ENCODE measurements at regions of chr6 and their contacts with region 1.

Region 1: GRCh38 chr6:159654483-159655098 is 38.5 kb downstream of the SOD2 start:
- DNase-seq: no peak
- H3K4me3 ChIP-seq: no peak overlapping the region
- H3K27ac ChIP-seq: no peak overlapping the region
- H3K4me1 ChIP-seq: no peaks in the 10 kb centered on the region
- H3K27me3 ChIP-seq: no peaks in the 10 kb centered on the region
- CTCF ChIP-seq: peak; percentile 64

Region 2: DNA sequence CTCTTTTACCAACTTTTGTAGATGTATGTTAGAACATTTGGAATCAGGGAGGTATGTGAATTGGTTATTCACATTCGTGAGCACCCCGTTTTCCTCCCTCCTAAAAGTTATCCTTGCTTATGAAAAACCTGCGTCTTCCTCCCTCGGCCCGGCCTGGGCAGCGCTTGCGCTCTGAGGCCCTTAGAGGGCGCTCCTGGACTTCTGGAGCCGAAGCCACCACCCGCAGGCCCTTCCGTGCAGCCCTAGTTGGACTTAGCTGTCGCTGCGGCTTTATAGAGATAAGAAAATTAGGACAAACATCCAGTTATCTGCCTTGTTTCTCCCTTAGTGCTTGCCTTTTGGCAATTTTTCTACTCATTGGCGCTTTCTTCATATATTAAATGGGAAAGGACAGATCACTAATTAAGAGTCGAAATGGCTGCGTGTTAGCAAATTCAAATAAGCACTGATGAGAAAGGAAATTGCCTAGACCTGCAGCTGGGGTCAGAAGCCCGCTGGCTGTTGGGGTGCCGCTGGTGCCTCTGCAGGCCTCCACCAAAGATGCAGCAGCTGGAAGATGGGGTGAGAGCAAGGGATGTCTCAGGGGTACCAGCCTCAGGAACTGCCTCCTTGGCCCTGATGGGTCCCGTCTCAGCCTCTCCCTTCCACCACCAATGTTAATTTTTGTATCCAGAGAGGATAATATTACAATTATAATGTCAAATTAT is 480.2 kb before region 1 on chr6:
- intact Hi-C with region 1: loop called (anchors 10 kb)
- DNase-seq: peak; percentile 74
- H3K4me3 ChIP-seq: peak overlapping the region; percentile 23
- H3K27ac ChIP-seq: no peak overlapping the region
- H3K4me1 ChIP-seq: peaks cover 25% of the 10 kb centered on the region
- H3K27me3 ChIP-seq: peaks cover 96% of the 10 kb centered on the region
- CTCF ChIP-seq: peak; percentile 94

Region 3: DNA sequence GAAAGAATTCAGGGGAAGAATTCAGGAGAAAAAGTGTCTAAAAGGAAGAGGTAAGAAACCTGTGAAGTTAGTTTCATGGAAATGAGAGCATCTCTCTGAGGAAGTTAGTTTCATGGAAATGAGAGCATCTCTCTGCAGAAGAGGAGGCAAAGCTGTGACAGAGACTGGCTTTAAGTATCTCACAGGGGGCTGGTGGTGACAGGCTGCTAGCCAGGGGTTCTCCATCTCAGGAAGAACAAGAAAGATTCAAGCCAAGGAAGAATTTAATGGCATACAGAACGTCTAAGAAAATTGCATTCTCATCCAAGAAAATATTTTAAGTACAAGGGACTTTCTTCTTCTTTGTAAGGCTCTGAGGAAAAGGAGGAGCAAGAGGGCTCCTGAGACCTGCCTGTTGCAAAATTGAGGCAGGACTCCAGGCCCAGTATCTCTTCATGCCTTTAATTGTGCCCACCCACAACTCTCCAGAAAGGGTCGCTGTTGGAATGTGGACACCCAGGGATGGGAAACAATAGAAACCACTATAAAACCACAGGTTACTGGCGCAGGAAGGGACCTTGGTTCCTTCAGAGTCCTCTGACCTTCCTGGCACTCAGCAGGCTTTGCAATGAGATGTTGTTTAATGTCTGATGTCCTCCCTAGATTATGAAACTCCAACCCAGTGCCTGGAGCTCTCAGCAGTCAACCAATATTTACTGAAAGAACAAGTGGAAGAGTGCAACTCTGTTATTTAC is 348.6 kb before region 1 on chr6:
- intact Hi-C with region 1: no loop called
- DNase-seq: no peak
- H3K4me3 ChIP-seq: no peak overlapping the region
- H3K27ac ChIP-seq: no peak overlapping the region
- H3K4me1 ChIP-seq: no peaks in the 10 kb centered on the region
- H3K27me3 ChIP-seq: peaks cover 21% of the 10 kb centered on the region
- CTCF ChIP-seq: no peak

Region 4: DNA sequence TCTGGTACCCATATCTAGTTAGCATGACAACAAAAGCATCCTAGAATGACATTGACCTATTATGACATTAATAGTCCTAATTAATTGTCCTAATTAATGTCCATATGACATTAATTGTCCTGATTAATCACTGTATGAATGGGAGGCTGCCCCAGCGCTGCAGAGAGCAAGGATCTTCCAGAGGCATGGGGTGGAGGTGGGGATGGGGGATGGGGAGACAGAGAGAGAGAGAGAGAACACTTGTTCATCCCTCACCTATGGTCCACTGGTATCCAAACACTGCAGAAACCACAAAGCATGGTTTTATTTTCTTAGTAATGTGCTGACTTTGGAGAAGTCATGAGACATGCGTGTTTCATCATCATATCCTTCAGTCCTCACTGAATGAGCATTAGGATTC is 250.3 kb before region 1 on chr6:
- intact Hi-C with region 1: no loop called
- DNase-seq: no peak
- H3K4me3 ChIP-seq: no peak overlapping the region
- H3K27ac ChIP-seq: no peak overlapping the region
- H3K4me1 ChIP-seq: no peaks in the 10 kb centered on the region
- H3K27me3 ChIP-seq: peaks cover 23% of the 10 kb centered on the region
- CTCF ChIP-seq: no peak